ENCODE measurements at regions of chr4 and their contacts with region 1.

Region 1: DNA sequence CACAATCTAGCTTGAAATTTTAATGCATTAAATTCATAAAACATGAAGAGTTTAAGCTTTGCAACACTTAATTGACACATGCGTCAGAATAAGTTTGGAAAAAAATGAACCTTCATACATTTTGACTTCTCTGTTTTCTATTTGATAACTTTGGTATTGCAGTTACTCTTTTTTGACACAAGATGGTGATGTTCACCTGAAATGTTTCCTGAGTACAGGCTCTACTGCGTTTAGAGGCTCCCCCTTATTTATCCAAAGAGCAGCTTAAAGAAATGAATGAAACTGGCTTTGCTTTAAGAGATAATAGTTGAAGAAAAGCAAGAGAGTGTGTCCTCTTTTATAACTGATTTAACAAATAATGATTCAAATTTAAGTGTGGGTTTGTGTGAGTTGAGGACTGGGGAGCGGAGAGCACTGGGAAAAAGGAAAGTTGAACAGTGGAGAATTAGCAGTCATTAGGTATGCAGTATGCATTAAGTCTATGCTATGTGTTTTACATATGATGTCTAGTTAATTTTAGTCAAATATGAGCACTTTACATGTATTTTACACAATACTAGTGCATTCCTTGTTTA is 180.6 kb upstream of the NUDT6 start:
- DNase-seq: no peak
- ATAC-seq: peak in 3 of 4 donors; percentile 57 to 85 (median 66)
- H3K4me3 ChIP-seq: no peak overlapping the region
- H3K27ac ChIP-seq: no peak overlapping the region
- H3K4me1 ChIP-seq: peaks cover 0 to 20% (median 0%) of the 10 kb centered on the region in 12 donors
- H3K27me3 ChIP-seq: no peaks in the 10 kb centered on the region
- CTCF ChIP-seq: peak; percentile 55 to 85 (median 74)
- POLR2A ChIP-seq: no peak

Region 2: GRCh38 chr4:123144616-123145015 is 41.6 kb after region 1 on chr4:
- intact Hi-C with region 1: no loop called
- DNase-seq: no peak
- ATAC-seq: no peak
- H3K4me3 ChIP-seq: no peak overlapping the region
- H3K27ac ChIP-seq: no peak overlapping the region
- H3K4me1 ChIP-seq: no peaks in the 10 kb centered on the region
- H3K27me3 ChIP-seq: no peaks in the 10 kb centered on the region
- CTCF ChIP-seq: no peak
- POLR2A ChIP-seq: no peak

Region 3: GRCh38 chr4:123555233-123555806 is 452.3 kb after region 1 on chr4:
- intact Hi-C with region 1: loop called in 3 of 10 experiments (anchors 10 kb)
- DNase-seq: peak; percentile 74 to 89 (median 85)
- ATAC-seq: peak; percentile 79 to 95 (median 92)
- H3K4me3 ChIP-seq: peak overlapping the region in 3 of 12 donors; percentile 1 to 27 (median 5)
- H3K27ac ChIP-seq: peak overlapping the region; percentile 49 to 83 (median 70)
- H3K4me1 ChIP-seq: peaks cover 0 to 37% (median 17%) of the 10 kb centered on the region in 12 donors
- H3K27me3 ChIP-seq: no peaks in the 10 kb centered on the region
- CTCF ChIP-seq: no peak
- POLR2A ChIP-seq: no peak

Region 4: GRCh38 chr4:123573866-123574508 is 471.0 kb after region 1 on chr4:
- intact Hi-C with region 1: loop called in 3 of 10 experiments (anchors 10 kb)
- DNase-seq: no peak
- ATAC-seq: no peak
- H3K4me3 ChIP-seq: no peak overlapping the region
- H3K27ac ChIP-seq: no peak overlapping the region
- H3K4me1 ChIP-seq: peaks cover 0 to 9% (median 0%) of the 10 kb centered on the region in 12 donors
- H3K27me3 ChIP-seq: no peaks in the 10 kb centered on the region
- CTCF ChIP-seq: no peak
- POLR2A ChIP-seq: no peak

Region 5: DNA sequence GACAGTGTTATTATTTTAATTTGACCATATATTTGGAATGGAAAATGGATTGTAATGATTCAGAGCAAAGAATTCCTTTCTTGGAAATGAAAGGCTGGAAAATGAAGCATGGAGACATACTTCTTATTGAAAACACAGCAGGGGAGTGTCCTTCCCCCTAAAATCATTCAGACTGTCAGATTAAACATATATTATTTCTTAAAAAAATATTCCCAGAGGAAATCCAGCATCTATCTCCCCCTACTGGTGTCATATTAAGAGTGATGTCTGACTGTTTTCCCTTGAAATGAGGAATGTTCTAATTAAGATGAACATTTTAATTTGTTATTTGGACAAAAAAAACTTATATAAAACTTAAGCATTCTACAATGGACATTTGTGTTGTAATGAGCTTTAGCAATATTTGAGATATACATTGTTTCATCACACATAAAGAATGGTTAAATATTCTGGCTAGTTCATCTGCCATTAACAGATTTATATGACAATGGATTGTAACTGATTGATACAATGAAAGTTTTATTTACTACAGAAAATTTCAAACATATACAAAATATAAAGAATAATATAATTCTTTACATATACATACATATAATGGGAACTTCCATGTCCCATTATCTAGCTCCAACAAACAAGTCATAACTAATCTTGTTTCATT is 558.2 kb after region 1 on chr4:
- intact Hi-C with region 1: loop called in 7 of 10 experiments (anchors 5 to 10 kb)
- DNase-seq: no peak
- ATAC-seq: no peak
- H3K4me3 ChIP-seq: no peak overlapping the region
- H3K27ac ChIP-seq: no peak overlapping the region
- H3K4me1 ChIP-seq: peaks cover 0 to 5% (median 0%) of the 10 kb centered on the region in 12 donors
- H3K27me3 ChIP-seq: no peaks in the 10 kb centered on the region
- CTCF ChIP-seq: peak; percentile 32 to 68 (median 50)
- POLR2A ChIP-seq: no peak

Region 6: GRCh38 chr4:124118084-124118460 is 1015.1 kb after region 1 on chr4:
- intact Hi-C with region 1: loop called in 8 of 10 experiments (anchors 2 to 10 kb)
- DNase-seq: no peak
- ATAC-seq: no peak
- H3K4me3 ChIP-seq: no peak overlapping the region
- H3K27ac ChIP-seq: no peak overlapping the region
- H3K4me1 ChIP-seq: no peaks in the 10 kb centered on the region
- H3K27me3 ChIP-seq: no peaks in the 10 kb centered on the region
- CTCF ChIP-seq: no peak
- POLR2A ChIP-seq: no peak

Region 7: DNA sequence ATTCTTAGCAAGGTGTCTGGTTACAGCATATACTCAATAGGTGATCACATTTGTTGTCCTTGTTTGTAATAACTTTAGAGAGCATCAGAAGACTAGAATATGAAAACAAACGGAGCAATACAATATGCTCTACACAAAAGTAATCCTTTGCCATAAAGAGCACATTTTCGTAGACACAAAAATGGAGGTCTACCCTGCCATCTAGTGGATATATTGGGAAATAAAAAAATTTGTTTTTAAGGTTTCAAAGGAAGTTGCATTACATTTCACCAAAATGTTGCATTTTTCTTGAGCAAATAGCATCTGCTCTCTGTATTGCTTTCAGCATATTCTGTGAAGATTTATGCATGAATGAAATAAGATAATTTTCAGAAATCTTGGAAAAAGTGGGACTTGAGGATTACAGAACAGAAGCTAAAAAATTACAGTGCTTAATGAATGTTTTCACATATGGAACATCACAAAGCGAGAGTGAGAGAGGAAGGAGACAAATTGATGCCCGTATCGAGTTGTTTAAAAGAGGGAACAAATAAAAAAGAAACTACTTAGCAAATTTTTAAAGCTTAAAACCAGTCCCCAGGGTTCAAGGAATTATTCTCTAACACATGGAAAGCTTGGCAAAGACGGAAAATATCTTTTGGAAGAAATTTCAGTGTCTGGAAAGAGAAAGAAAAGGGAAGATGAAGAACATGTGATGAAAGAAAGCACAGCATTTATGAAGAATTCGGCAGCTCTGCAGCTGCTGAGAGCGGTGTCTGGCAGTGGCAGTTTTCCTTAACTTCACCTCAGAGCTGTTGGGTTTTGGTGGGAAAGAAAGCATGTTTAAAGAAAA is 1219.5 kb after region 1 on chr4:
- intact Hi-C with region 1: loop called in 4 of 10 experiments (anchors 5 to 10 kb)
- DNase-seq: no peak
- ATAC-seq: peak in 1 of 4 donors; percentile 56
- H3K4me3 ChIP-seq: peak overlapping the region in 8 of 12 donors; percentile 3 to 38 (median 21)
- H3K27ac ChIP-seq: peak overlapping the region in 1 of 12 donors; percentile 32
- H3K4me1 ChIP-seq: no peaks in the 10 kb centered on the region
- H3K27me3 ChIP-seq: no peaks in the 10 kb centered on the region
- CTCF ChIP-seq: peak; percentile 47 to 73 (median 64)
- POLR2A ChIP-seq: no peak